ENCODE measurements at regions of chr16 and their contacts with region 1.

Region 1: GRCh38 chr16:11535471-11535870 is 51.2 kb downstream of the LITAF start:
- DNase-seq: peak; percentile 37 to 93
- H3K4me3 ChIP-seq: no peak overlapping the region
- H3K27ac ChIP-seq: peak overlapping the region; percentile 39; the same call in 1 of the 2 replicates
- H3K4me1 ChIP-seq: peaks cover 26% of the 10 kb centered on the region
- H3K27me3 ChIP-seq: no peaks in the 10 kb centered on the region
- CTCF ChIP-seq: no peak

Region 2: GRCh38 chr16:11105038-11105903 is 430.2 kb before region 1 on chr16:
- CTCF ChIA-PET with region 1: no interaction called
- POLR2A ChIA-PET with region 1: no interaction called
- intact Hi-C with region 1: no loop called
- DNase-seq: peak in 1 of 2 experiments; percentile 81
- H3K4me3 ChIP-seq: no peak overlapping the region
- H3K27ac ChIP-seq: no peak overlapping the region
- H3K4me1 ChIP-seq: peaks cover 17% of the 10 kb centered on the region
- H3K27me3 ChIP-seq: no peaks in the 10 kb centered on the region
- CTCF ChIP-seq: no peak

Region 3: DNA sequence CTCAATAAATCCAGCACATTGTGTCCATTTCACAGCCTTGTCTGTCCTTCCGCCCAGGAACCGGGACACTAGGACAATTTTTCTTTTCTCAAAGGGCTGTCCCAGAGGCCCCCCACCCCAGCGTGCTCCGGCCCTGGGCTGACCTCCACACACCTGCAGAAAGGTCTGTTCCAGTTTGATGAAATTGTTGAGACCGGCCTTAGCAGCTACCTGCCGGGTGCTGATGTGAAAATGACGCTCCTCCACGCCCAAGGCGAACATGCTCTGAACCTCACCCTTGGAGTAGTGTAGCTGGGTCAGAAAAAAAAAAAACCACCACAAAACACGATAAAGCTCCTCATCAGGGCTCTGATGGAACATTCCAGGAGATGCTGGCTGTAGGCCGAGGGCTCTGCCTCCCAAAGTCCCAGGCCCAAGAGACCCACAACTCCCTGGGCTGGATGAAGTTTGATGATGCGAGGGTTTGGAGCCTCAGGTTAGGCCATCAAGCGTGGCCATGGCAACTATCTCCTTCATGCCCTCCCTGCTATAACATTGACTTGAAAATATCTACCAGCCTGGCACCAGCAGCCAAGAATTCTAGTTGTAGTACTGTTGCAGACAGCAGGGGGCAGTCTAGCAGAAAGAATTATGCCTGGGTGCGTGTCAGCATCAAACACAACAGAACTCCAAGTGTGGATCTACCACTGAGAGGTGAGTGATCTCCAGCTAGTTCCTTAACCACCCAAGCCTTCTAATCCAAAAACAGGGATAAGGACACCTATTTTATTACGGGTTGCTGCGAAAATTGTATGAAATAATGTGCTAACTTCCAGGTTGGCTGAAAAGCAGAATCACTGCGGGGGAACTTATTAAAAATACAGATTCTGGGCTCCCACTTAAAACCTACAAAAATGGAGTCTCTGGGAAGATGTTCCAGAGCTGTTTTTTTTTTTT is 128.2 kb before region 1 on chr16:
- CTCF ChIA-PET with region 1: interaction called, 4 read pairs
- POLR2A ChIA-PET with region 1: no interaction called
- intact Hi-C with region 1: loop called (anchors 1 kb)
- DNase-seq: peak; percentile 48 to 72
- H3K4me3 ChIP-seq: no peak overlapping the region
- H3K27ac ChIP-seq: no peak overlapping the region
- H3K4me1 ChIP-seq: no peaks in the 10 kb centered on the region
- H3K27me3 ChIP-seq: no peaks in the 10 kb centered on the region
- CTCF ChIP-seq: peak; percentile 85

Region 4: DNA sequence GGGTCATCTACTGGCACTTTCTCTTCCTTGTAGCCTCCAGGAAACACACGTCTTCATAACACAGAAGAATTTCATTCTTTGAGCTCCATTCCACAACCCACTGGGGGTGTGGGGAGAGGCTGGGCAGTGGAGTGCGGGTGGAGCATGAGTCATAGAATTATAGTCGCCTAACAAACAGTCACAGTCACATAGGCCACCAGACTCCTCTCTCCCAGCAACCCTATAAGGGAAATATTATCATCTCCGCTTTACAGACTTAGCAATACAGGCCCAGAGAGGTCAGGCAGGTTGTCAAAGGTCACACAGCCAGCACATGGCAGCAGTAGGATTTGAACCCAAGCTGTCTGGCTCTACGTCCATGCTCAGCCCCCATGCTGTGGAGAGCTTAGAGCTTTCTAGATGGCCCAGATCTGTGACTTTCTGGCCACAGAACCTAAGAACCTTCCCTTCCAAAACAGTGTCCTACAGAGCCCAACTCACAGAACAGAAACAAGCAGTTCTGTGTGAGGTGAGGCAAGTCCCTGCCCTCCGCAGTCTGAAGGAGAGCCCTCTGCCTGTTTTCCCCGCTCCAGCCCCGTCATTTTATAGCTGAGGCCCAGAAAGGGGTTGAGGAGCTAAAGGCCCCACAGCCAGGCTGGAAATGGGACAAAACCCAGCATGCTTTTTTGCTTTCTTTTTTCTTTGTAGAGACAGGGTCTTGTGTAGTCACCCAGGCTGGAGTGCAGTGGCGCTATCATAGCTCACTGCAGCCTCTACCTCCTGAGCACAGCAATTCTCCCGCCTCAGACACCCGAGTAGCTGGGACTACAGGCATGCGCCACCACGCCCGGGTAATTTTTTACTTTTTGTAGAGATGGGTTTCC is 62.0 kb after region 1 on chr16:
- CTCF ChIA-PET with region 1: interaction called, 3 read pairs
- POLR2A ChIA-PET with region 1: interaction called, 55 read pairs
- intact Hi-C with region 1: no loop called
- DNase-seq: peak; percentile 74 to 77
- H3K4me3 ChIP-seq: no peak overlapping the region
- H3K27ac ChIP-seq: peak overlapping the region; percentile 84
- H3K4me1 ChIP-seq: peaks cover 41% of the 10 kb centered on the region
- H3K27me3 ChIP-seq: no peaks in the 10 kb centered on the region
- CTCF ChIP-seq: no peak

Region 5: DNA sequence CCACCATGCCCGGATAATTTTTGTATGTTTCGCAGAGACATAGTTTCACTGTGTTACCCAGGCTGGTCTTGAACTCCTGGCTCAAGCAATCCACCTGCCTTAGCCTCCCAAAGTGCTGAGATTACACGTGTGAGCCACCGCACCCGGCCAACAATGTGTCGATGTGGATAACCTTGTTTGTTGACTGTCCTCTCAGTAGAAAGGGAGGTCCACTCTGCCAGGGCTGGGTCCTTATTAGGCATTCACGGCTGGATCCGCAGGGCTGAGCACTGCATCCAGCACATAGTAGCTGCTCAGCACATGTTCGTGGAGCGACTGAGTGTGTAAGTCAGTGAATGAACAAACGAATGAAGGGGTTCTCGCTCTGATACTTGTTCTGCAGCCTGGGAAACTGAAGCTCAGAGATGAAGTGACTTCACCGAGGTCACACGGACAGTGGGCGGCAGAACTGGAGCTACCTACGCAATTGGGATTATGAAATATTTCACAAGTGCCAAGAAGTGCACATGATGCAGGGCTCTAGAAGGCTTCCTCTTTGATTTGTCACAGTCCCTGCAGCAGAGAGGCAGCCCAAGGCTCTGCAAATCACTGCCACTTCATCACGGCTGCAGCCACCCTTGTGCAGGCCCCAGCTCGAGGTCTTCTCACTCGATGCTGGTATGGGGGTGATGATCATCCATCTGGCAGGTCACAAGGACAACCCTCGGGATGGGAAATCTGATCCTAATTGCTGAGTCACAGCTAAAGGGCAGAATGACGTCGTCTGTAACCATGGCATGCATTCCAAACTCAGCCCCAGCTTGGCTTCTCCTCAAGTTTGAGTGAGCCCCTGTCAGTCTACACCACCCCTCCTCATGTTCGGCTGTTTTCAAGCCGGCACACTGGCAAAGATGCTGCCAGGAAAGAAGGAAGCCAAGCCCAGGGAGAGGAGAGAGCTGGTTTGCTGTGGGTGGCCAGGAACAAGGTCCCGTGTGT is 104.7 kb after region 1 on chr16:
- CTCF ChIA-PET with region 1: interaction called, 3 read pairs
- POLR2A ChIA-PET with region 1: interaction called, 4 read pairs
- intact Hi-C with region 1: loop called (anchors 1 kb)
- DNase-seq: peak; percentile 92 to 97
- H3K4me3 ChIP-seq: peak overlapping the region; percentile 36; the same call in 1 of the 2 replicates
- H3K27ac ChIP-seq: peak overlapping the region; percentile 99
- H3K4me1 ChIP-seq: peaks cover 49% of the 10 kb centered on the region
- H3K27me3 ChIP-seq: no peaks in the 10 kb centered on the region
- CTCF ChIP-seq: no peak

Region 6: GRCh38 chr16:11667824-11668622 is 132.6 kb after region 1 on chr16 and contains the start of gene SNN:
- CTCF ChIA-PET with region 1: no interaction called
- POLR2A ChIA-PET with region 1: no interaction called
- intact Hi-C with region 1: loop called (anchors 5 kb)
- DNase-seq: peak; percentile 61 to 92
- H3K4me3 ChIP-seq: peak within 1 kb of the TSS; percentile 53; the same call in 1 of the 2 replicates
- H3K27ac ChIP-seq: no peak within 1 kb of the TSS
- H3K4me1 ChIP-seq: no peaks in the 10 kb centered on the region
- H3K27me3 ChIP-seq: no peaks in the 10 kb centered on the region
- CTCF ChIP-seq: no peak
- total RNA-seq, gene SNN: 12.6 and 17.0 TPM in 2 replicates